CD4-positive, alpha-beta T cell (primary cell): ENCODE measurements at regions of chr16 and their contacts with region 1.

Region 1: GRCh38 chr16:88561485-88562369 is 8.5 kb upstream of the ZC3H18 start:
- DNase-seq: peak; percentile 36 to 80 (median 48)
- ATAC-seq: peak; percentile 86
- H3K4me3 ChIP-seq: no peak overlapping the region
- H3K4me3 Mint-ChIP-seq: peak overlapping the region; percentile 48
- H3K27ac ChIP-seq: no peak overlapping the region
- H3K27ac Mint-ChIP-seq: no peak overlapping the region
- H3K4me1 ChIP-seq: peaks cover 5% of the 10 kb centered on the region
- H3K4me1 Mint-ChIP-seq: peaks cover 3% of the 10 kb centered on the region
- H3K27me3 ChIP-seq: peaks cover 0 to 3% of the 10 kb centered on the region in 2 experiments
- H3K27me3 Mint-ChIP-seq: peaks cover 5% of the 10 kb centered on the region
- CTCF ChIP-seq: peak; percentile 56

Region 2: DNA sequence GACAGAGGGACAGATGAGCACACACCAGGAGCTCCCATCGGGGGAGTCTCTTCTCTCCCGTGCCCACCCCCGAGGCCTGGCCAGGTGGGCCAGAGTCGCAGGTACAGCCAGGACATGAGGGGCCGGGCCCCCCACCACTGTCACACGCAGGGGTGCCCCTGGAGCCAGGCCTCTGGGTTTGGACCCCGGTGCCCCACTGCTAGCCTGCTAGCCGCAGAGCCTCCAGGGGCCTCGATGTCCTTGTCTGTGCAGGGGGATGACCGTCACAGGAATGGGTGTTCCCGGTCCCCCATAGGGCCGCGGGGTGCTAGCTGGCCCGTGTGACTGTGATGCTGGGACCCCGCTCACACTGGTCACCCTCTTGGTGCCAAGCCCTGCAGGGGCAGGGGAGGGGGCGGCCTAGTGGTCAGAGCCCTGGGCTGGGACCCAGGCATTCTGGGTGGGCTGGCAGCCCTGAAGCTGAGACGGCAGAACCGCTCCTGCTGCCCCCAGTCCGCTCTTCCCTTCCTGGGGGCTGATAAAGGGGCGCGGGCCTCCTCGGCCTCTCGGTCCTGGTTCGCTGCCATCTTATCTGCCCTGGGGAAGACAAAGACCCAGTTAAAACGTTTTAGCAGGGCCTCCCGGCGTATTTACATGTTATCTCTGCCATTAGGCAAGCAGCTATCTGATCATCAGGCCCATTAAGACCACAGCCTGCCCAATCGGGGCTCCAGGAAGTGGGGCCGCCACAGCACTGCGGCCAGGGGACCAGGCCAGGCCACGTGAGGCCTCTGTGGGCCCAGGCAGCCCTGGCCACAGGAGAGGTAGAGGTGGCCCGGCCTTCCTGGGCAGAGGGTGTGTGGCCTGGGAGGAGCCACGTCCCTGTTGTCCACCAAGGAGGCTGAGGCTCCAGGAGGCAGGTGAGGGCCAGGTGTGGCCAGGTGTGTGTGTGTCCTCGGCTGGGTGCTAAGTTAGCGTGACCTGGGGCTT is 48.7 kb before region 1 on chr16:
- CTCF ChIA-PET with region 1: no interaction called
- POLR2A ChIA-PET with region 1: no interaction called
- intact Hi-C with region 1: no loop called
- DNase-seq: no peak
- ATAC-seq: no peak
- H3K4me3 ChIP-seq: no peak overlapping the region
- H3K4me3 Mint-ChIP-seq: no peak overlapping the region
- H3K27ac ChIP-seq: no peak overlapping the region
- H3K27ac Mint-ChIP-seq: no peak overlapping the region
- H3K4me1 ChIP-seq: no peaks in the 10 kb centered on the region
- H3K4me1 Mint-ChIP-seq: no peaks in the 10 kb centered on the region
- H3K27me3 ChIP-seq: no peaks in the 10 kb centered on the region
- H3K27me3 Mint-ChIP-seq: no peaks in the 10 kb centered on the region
- CTCF ChIP-seq: no peak

Region 3: GRCh38 chr16:88533932-88534732 is 27.6 kb before region 1 on chr16:
- CTCF ChIA-PET with region 1: no interaction called
- POLR2A ChIA-PET with region 1: no interaction called
- intact Hi-C with region 1: loop called in 1 of 2 experiments (anchors 2 kb)
- DNase-seq: peak; percentile 60 to 90 (median 77)
- ATAC-seq: peak; percentile 79
- H3K4me3 ChIP-seq: peak overlapping the region; percentile 25
- H3K4me3 Mint-ChIP-seq: no peak overlapping the region
- H3K27ac ChIP-seq: no peak overlapping the region
- H3K27ac Mint-ChIP-seq: peak overlapping the region; percentile 68
- H3K4me1 ChIP-seq: peaks cover 10% of the 10 kb centered on the region
- H3K4me1 Mint-ChIP-seq: peaks cover 11% of the 10 kb centered on the region
- H3K27me3 ChIP-seq: peaks cover 0 to under 1% of the 10 kb centered on the region in 2 experiments
- H3K27me3 Mint-ChIP-seq: no peaks in the 10 kb centered on the region
- CTCF ChIP-seq: no peak

Region 4: DNA sequence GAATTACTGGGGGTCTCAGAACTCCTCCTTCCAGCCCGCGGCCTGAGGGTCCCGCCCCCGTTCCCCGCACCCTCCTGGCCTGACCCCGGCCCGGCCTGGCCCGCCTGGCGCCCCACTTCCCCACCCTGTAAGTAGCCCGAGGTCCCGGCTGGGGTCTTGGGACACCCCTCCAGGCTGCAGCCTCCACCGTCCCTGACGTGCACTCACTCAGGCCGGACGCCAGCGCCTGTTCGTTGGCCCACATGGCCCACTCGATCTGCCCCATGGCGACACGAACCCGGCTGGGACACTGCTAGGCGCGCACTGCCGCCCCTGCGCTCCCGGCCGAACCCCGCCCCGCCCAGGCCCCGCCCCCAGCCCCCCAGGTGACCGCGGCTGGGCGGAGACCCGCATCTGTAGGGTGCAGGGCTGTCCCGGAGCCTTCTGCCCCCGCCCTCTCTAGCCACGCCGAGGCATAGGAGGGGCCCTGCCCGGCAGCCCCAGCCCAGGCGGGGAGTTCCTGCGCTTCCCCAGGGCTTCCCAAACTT is 89.1 kb after region 1 on chr16 and contains the start of gene CYBA:
- CTCF ChIA-PET with region 1: no interaction called
- POLR2A ChIA-PET with region 1: no interaction called
- intact Hi-C with region 1: no loop called
- DNase-seq: peak; percentile 64 to 91 (median 76)
- ATAC-seq: peak; percentile 76
- H3K4me3 ChIP-seq: peak within 1 kb of the TSS; percentile 96
- H3K4me3 Mint-ChIP-seq: peak within 1 kb of the TSS; percentile 93
- H3K27ac ChIP-seq: peak within 1 kb of the TSS; percentile 81 to 94
- H3K27ac Mint-ChIP-seq: peak within 1 kb of the TSS; percentile 95
- H3K4me1 ChIP-seq: peaks cover 56% of the 10 kb centered on the region
- H3K4me1 Mint-ChIP-seq: peaks cover 14% of the 10 kb centered on the region
- H3K27me3 ChIP-seq: no peaks in the 10 kb centered on the region
- H3K27me3 Mint-ChIP-seq: no peaks in the 10 kb centered on the region
- CTCF ChIP-seq: no peak
- total RNA-seq, gene CYBA: 292 to 294 TPM